Adrenal gland (tissue), 19 donors: ENCODE measurements at regions of chr7 and their contacts with region 1.

Region 1: DNA sequence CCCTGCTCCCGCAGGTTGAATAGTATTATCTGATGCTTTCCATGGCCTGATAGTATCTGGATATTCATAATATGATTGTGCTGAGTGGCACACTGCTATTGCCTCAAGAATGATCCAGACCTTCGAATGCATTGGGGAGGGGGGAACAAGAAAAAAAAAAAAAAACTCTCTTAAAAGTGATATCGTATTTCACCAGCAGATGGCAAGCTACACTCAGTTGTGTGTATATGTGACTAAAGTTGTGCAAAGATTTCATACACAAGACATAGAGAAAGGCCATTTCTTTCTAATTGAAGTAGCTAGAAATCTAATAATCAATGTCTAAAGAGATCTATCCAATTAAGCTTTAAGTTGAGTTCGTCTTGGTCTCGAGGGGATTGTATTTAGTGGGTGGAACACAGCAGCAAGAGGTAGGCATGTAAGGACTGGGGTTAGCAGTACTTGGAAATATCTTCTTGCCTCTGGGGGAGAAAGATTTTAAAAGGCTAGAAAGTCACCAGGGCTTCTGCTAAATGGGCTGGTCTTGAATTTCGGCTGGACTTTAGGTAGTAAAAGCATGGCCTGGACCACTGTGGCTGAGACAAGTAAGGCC is 15.3 kb downstream of the SFRP4 start:
- DNase-seq: peak in 1 of 7 donors; percentile 20
- H3K4me3 ChIP-seq: no peak overlapping the region
- H3K27ac ChIP-seq: peak overlapping the region in 1 of 5 donors; percentile 53
- H3K4me1 ChIP-seq: peaks cover 4 to 15% of the 10 kb centered on the region in 2 donors
- H3K27me3 ChIP-seq: no peaks in the 10 kb centered on the region
- CTCF ChIP-seq: peak; percentile 37 to 89 (median 70)
- POLR2A ChIP-seq: no peak

Region 2: GRCh38 chr7:38034062-38034907 is 133.0 kb after region 1 on chr7:
- intact Hi-C with region 1: no loop called
- DNase-seq: no peak
- H3K4me3 ChIP-seq: no peak overlapping the region
- H3K27ac ChIP-seq: no peak overlapping the region
- H3K4me1 ChIP-seq: no peaks in the 10 kb centered on the region
- H3K27me3 ChIP-seq: no peaks in the 10 kb centered on the region
- CTCF ChIP-seq: no peak
- POLR2A ChIP-seq: no peak

Region 3: GRCh38 chr7:38222481-38223096 is 321.3 kb after region 1 on chr7:
- intact Hi-C with region 1: loop called (anchors 5 to 10 kb)
- DNase-seq: peak in 3 of 7 donors; percentile 27 to 41 (median 31)
- H3K4me3 ChIP-seq: no peak overlapping the region
- H3K27ac ChIP-seq: no peak overlapping the region
- H3K4me1 ChIP-seq: no peaks in the 10 kb centered on the region
- H3K27me3 ChIP-seq: no peaks in the 10 kb centered on the region
- CTCF ChIP-seq: peak; percentile 83 to 96 (median 90)
- POLR2A ChIP-seq: no peak